ENCODE measurements at regions of chr17 and their contacts with region 1.

Region 1: DNA sequence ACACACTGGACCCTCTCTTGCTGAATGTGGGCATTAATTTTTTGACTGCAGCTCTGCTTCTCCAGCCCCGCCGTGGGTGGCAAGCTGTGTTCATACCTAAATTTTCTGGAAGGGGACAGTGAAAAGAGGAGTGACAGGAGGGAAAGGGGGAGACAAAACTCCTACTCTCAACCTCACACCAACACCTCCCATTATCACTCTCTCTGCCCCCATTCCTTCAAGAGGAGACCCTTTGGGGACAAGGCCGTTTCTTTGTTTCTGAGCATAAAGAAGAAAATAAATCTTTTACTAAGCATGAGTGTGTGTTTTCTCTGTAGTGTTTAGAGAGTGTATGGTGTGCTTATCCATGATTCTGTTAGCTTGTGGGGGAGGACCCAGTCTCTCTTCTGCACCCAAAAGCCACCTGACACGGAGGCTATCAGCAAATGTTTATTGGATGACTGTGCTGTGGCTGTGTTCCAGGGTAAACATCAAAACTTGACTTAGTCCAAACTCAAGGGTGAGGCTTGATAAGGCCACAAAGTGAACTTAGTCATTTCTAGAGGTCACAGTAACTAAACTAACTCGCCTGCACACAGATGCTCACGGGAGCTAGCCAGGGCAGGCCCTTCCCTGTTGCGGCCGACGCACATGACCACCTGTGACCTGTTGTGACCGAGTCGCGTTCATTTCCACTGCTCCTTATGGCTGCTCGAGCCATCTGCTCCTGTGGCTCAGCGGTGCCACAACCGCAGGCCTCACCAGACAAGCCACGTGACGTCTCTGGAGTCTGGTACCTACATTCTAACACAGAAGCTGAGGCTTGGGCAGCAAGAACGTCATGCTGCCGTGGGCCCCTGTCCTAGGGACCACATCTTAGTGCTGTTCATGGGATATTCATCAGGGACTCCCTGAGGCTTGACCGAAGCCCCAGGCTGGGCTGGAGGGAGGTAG is 9.8 kb upstream of the MED11 start:
- DNase-seq: no peak
- H3K4me3 ChIP-seq: no peak overlapping the region
- CTCF ChIP-seq: no peak

Region 2: GRCh38 chr17:4519361-4519788 is 202.1 kb before region 1 on chr17:
- in situ Hi-C with region 1: loop called (anchors 10 kb)
- DNase-seq: no peak
- H3K4me3 ChIP-seq: no peak overlapping the region
- CTCF ChIP-seq: no peak

Measured in astrocyte of the cerebellum (primary cell).